HCT116 (cell line): ENCODE measurements at regions of chr16 and their contacts with region 1.

Region 1: DNA sequence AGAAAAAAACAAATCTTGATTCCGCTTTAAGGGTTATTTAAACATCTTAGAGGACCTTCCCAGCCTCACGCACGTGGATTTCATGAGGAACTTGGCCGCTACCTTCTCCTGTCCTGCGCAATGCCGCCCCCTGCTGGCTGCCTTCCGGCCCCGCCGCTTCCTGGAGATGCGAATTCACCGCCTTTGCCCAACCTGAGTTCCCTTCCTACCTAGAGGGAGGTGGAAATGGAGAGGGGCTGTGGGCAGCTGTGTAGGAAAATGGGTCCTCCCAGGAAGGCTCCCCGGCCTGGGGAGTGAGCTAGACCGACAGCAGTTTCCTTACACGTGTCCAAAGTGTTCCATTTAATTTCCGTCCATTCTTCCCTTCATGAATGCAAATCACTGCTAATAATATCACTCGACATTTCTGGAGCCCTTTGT is 1.0 kb upstream of the ABCC12 start:
- DNase-seq: peak; percentile 62
- ATAC-seq: peak; percentile 81
- H3K4me3 ChIP-seq: no peak overlapping the region
- H3K27ac ChIP-seq: no peak overlapping the region
- H3K4me1 ChIP-seq: peaks cover 14 to 34% of the 10 kb centered on the region in 2 experiments
- H3K27me3 ChIP-seq: no peaks in the 10 kb centered on the region
- CTCF ChIP-seq: peak; percentile 74 to 96 (median 84)
- POLR2A ChIP-seq: no peak
- RAD21 ChIP-seq: peak; percentile 93

Region 2: DNA sequence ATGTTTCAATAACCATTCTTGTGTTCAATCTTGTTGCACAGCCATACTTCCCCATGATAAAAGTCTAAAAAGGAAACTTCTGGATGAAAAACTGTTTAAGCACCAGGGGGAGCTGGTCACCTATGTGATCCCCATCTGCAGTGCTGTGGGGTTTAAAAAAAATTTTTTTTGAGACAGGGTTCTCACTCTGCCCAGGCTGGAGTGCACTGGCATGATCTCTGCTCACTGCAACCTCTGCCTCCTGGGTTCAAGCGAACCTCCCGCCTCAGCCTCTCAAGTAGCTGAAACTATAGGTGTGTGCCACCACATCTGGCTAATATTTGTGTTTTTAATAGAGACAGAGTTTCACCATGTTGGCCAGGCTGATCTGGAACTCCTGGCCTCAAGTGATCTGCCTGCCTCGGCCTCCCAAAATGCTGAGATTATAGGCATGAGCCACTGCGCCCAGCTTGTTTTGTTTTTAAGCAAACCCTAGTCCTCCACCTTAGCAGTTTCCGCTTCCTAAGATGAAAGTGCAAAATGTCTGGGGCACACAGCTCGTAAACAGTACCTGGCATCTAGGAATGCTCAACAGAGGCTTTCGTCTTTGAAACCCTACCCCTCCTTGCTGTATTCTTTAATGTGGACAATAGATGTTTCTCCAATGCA is 1208.8 kb before region 1 on chr16:
- CTCF ChIA-PET with region 1: interaction called, 3 read pairs
- POLR2A ChIA-PET with region 1: no interaction called
- RAD21 ChIA-PET with region 1: no interaction called
- intact Hi-C with region 1: loop called (anchors 2 kb)
- DNase-seq: peak; percentile 29
- ATAC-seq: peak; percentile 90
- H3K4me3 ChIP-seq: no peak overlapping the region
- H3K27ac ChIP-seq: no peak overlapping the region
- H3K4me1 ChIP-seq: no peaks in the 10 kb centered on the region
- H3K27me3 ChIP-seq: no peaks in the 10 kb centered on the region
- CTCF ChIP-seq: peak; percentile 63 to 75 (median 65)
- POLR2A ChIP-seq: no peak
- RAD21 ChIP-seq: peak; percentile 89

Region 3: GRCh38 chr16:47258874-47259461 is 897.8 kb before region 1 on chr16:
- CTCF ChIA-PET with region 1: no interaction called
- POLR2A ChIA-PET with region 1: no interaction called
- RAD21 ChIA-PET with region 1: no interaction called
- intact Hi-C with region 1: loop called (anchors 5 kb)
- DNase-seq: peak; percentile 18
- ATAC-seq: peak; percentile 72
- H3K4me3 ChIP-seq: no peak overlapping the region
- H3K27ac ChIP-seq: no peak overlapping the region
- H3K4me1 ChIP-seq: no peaks in the 10 kb centered on the region
- H3K27me3 ChIP-seq: no peaks in the 10 kb centered on the region
- CTCF ChIP-seq: peak; percentile 34 to 82 (median 70); a peak in 5 of 6 replicates
- POLR2A ChIP-seq: no peak
- RAD21 ChIP-seq: peak; percentile 46

Region 4: GRCh38 chr16:47873434-47873833 is 283.4 kb before region 1 on chr16:
- CTCF ChIA-PET with region 1: no interaction called
- POLR2A ChIA-PET with region 1: no interaction called
- RAD21 ChIA-PET with region 1: no interaction called
- intact Hi-C with region 1: loop called (anchors 10 kb)
- DNase-seq: no peak
- ATAC-seq: peak; percentile 70; the same call in 1 of the 2 replicates
- H3K4me3 ChIP-seq: no peak overlapping the region
- H3K27ac ChIP-seq: no peak overlapping the region
- H3K4me1 ChIP-seq: no peaks in the 10 kb centered on the region
- H3K27me3 ChIP-seq: peaks cover 19% of the 10 kb centered on the region; the same call in 1 of the 2 replicates
- CTCF ChIP-seq: peak; percentile 26 to 70 (median 61); a peak in 5 of 6 replicates
- POLR2A ChIP-seq: no peak
- RAD21 ChIP-seq: peak; percentile 53

Region 5: DNA sequence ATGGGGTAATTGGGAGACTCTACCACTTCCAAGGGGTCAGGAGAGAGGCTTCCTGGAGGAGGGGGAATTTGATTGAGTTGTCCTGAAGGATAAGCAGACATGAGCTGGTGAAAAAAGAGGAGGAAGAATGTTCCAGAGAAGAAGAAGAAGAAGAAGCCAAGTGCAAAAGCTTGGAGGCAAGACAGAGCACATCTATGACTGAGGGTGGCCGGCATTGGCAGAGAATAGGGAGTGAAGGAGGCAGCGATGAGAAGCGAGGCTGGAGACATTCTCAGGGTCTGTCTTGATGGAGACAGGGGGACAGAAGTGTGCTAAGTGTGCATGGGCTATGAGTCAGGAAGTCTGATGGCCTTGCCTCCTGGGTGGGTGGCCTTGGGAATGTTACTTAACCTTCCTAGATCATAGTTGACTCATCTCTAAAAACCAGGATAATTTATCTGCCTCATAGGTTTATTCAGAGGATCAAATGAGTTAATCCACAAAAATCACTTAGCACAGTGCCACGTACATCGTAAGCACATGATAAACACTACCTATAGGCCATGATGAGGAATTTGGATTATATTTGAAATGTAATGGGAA is 172.7 kb before region 1 on chr16:
- CTCF ChIA-PET with region 1: no interaction called
- POLR2A ChIA-PET with region 1: no interaction called
- RAD21 ChIA-PET with region 1: no interaction called
- intact Hi-C with region 1: no loop called
- DNase-seq: no peak
- ATAC-seq: no peak
- H3K4me3 ChIP-seq: no peak overlapping the region
- H3K27ac ChIP-seq: no peak overlapping the region
- H3K4me1 ChIP-seq: no peaks in the 10 kb centered on the region
- H3K27me3 ChIP-seq: peaks cover 63% of the 10 kb centered on the region
- CTCF ChIP-seq: no peak
- POLR2A ChIP-seq: no peak
- RAD21 ChIP-seq: no peak

Region 6: GRCh38 chr16:48373258-48374029 is 216.6 kb after region 1 on chr16:
- CTCF ChIA-PET with region 1: no interaction called
- POLR2A ChIA-PET with region 1: no interaction called
- RAD21 ChIA-PET with region 1: no interaction called
- intact Hi-C with region 1: no loop called
- DNase-seq: no peak
- ATAC-seq: no peak
- H3K4me3 ChIP-seq: no peak overlapping the region
- H3K27ac ChIP-seq: no peak overlapping the region
- H3K4me1 ChIP-seq: peaks cover 6 to 9% of the 10 kb centered on the region in 2 experiments; a peak in 2 of 4 replicates
- H3K27me3 ChIP-seq: no peaks in the 10 kb centered on the region
- CTCF ChIP-seq: no peak
- POLR2A ChIP-seq: no peak
- RAD21 ChIP-seq: no peak